Naive thymus-derived CD4-positive, alpha-beta T cell (primary cell): ENCODE measurements at regions of chr18 and their contacts with region 1.

Region 1: DNA sequence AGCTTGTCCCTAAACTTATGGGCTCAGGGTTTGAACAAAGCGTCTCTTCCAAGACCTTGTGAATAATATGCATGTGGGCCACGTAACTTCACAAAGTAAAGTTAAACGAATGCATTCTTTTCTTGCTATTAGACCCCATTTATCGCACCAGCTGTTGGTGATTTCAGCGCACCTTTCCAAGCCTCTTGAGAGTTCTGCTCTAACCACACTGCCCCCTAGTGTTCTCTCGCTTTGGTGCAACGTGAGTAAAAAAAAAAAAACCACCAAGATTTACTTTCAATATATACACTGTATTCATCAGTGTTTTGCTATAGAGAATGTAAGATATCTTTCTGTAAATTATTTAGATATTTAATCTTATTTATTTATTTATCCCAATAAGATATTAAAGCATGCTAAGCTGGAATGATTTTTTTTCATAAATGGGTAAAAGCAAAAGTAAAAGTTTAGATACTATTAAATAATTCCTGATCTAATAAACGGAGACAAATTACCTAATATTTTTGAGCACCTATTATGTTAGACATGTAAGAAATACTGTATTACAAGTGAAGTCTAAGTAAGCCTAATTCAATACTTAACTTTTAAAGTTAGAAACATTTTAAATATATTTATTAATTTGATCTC is 459.5 kb downstream of the DLGAP1 start:
- DNase-seq: peak in 8 of 9 donors; percentile 8 to 57 (median 40)
- ATAC-seq: peak; percentile 68
- H3K4me3 ChIP-seq: no peak overlapping the region
- H3K4me3 Mint-ChIP-seq: no peak overlapping the region
- H3K27ac ChIP-seq: no peak overlapping the region
- H3K27ac Mint-ChIP-seq: no peak overlapping the region
- H3K4me1 ChIP-seq: no peaks in the 10 kb centered on the region
- H3K4me1 Mint-ChIP-seq: peaks cover 0 to 5% (median 0%) of the 10 kb centered on the region in 7 donors
- H3K27me3 ChIP-seq: no peaks in the 10 kb centered on the region
- H3K27me3 Mint-ChIP-seq: peaks cover 0 to 12% (median 0%) of the 10 kb centered on the region in 5 donors

Region 2: GRCh38 chr18:3703732-3704176 is 291.8 kb before region 1 on chr18:
- CTCF ChIA-PET with region 1: no interaction called
- POLR2A ChIA-PET with region 1: no interaction called
- intact Hi-C with region 1: loop called (anchors 5 kb)
- DNase-seq: peak in 5 of 9 donors; percentile 1 to 10 (median 5)
- ATAC-seq: peak; percentile 51
- H3K4me3 ChIP-seq: no peak overlapping the region
- H3K4me3 Mint-ChIP-seq: no peak overlapping the region
- H3K27ac ChIP-seq: no peak overlapping the region
- H3K27ac Mint-ChIP-seq: no peak overlapping the region
- H3K4me1 ChIP-seq: no peaks in the 10 kb centered on the region
- H3K4me1 Mint-ChIP-seq: peaks cover 0 to 7% (median 2%) of the 10 kb centered on the region in 7 donors
- H3K27me3 ChIP-seq: peaks cover 0 to 6% of the 10 kb centered on the region in 2 donors
- H3K27me3 Mint-ChIP-seq: peaks cover 21 to 49% (median 38%) of the 10 kb centered on the region in 5 donors

Region 3: GRCh38 chr18:3885209-3885792 is 110.3 kb before region 1 on chr18:
- CTCF ChIA-PET with region 1: no interaction called
- POLR2A ChIA-PET with region 1: no interaction called
- intact Hi-C with region 1: no loop called
- DNase-seq: no peak
- ATAC-seq: no peak
- H3K4me3 ChIP-seq: no peak overlapping the region
- H3K4me3 Mint-ChIP-seq: no peak overlapping the region
- H3K27ac ChIP-seq: no peak overlapping the region
- H3K27ac Mint-ChIP-seq: no peak overlapping the region
- H3K4me1 ChIP-seq: no peaks in the 10 kb centered on the region
- H3K4me1 Mint-ChIP-seq: no peaks in the 10 kb centered on the region
- H3K27me3 ChIP-seq: no peaks in the 10 kb centered on the region
- H3K27me3 Mint-ChIP-seq: peaks cover 0 to 22% (median 7%) of the 10 kb centered on the region in 5 donors